H1 (cell line): ENCODE measurements at regions of chr1 and their contacts with region 1.

Region 1: DNA sequence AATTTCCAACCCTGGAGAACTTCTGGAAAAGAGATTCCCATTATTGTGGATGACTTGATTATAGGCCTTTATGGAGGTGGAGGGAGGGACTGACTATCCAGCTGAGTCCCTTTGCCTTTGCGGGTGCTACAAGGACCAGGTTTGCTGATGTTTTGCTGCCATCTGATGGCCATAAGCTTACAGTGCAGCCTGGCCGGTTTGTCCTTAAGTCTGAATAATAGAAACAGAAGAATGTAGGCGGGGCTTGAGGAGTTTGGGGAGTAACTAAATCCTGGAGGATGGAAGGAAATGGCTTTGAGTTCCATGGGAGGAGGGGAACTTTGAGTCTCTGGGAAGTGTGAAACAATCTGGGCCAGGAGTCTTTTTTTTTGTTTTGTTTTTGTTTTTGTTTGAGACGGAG is 55.7 kb upstream of the CD1D start:
- DNase-seq: peak; percentile 89 to 91
- H3K4me3 ChIP-seq: no peak overlapping the region
- H3K27ac ChIP-seq: no peak overlapping the region
- H3K4me1 ChIP-seq: peaks cover 0 to 10% (median 7%) of the 10 kb centered on the region in 4 experiments; a peak in 5 of 7 replicates
- H3K27me3 ChIP-seq: no peaks in the 10 kb centered on the region
- CTCF ChIP-seq: peak; percentile 76 to 99 (median 97)
- EP300 ChIP-seq: 0 out of 3 replicates have a peak, but pooled peaks of 1 of the 2 experiments have one; percentile 26
- POLR2A ChIP-seq: no peak
- RAD21 ChIP-seq: peak; percentile 99 to 100

Region 2: DNA sequence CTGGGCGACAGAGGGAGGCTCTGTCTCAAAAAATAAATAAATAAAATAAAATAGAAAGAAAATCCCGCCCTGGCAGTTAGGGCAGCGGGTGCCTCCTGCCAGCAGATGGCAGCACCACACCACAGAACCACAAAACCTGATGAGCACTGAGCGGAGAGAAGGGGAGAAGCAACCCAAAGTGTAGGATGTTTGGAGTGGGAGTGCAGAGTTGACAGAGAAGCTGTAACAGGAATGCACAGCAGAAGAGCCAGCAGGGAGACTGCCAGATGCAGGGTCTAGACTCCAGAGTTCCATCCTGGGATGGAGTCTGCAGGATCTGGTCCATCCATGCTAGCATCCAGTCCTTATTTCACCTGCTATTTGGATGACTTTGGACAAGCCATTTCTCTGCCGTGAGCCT is 161.3 kb before region 1 on chr1:
- CTCF ChIA-PET with region 1: interaction called, 2,918 read pairs
- POLR2A ChIA-PET with region 1: interaction called, 5 read pairs
- DNase-seq: peak; percentile 17 to 86
- H3K4me3 ChIP-seq: no peak overlapping the region
- H3K27ac ChIP-seq: no peak overlapping the region
- H3K4me1 ChIP-seq: peaks cover 0 to 8% (median 1%) of the 10 kb centered on the region in 4 experiments; a peak in 3 of 7 replicates
- H3K27me3 ChIP-seq: peaks cover 0 to 2% (median 0%) of the 10 kb centered on the region in 4 experiments; a peak in 1 of 7 replicates
- CTCF ChIP-seq: peak; percentile 75 to 95 (median 76)
- EP300 ChIP-seq: no peak
- POLR2A ChIP-seq: no peak
- RAD21 ChIP-seq: peak; percentile 96 to 97

Region 3: GRCh38 chr1:158035976-158036583 is 88.9 kb before region 1 on chr1:
- CTCF ChIA-PET with region 1: interaction called, 25 read pairs
- POLR2A ChIA-PET with region 1: no interaction called
- DNase-seq: no peak
- H3K4me3 ChIP-seq: no peak overlapping the region
- H3K27ac ChIP-seq: no peak overlapping the region; the same call in 1 of the 2 replicates
- H3K4me1 ChIP-seq: peaks cover 3 to 12% (median 7%) of the 10 kb centered on the region in 4 experiments
- H3K27me3 ChIP-seq: no peaks in the 10 kb centered on the region
- CTCF ChIP-seq: peak in 2 of 3 experiments; percentile 57 to 65; a peak in 3 of 4 replicates
- EP300 ChIP-seq: no peak
- POLR2A ChIP-seq: no peak
- RAD21 ChIP-seq: peak; percentile 51 to 61

Region 4: DNA sequence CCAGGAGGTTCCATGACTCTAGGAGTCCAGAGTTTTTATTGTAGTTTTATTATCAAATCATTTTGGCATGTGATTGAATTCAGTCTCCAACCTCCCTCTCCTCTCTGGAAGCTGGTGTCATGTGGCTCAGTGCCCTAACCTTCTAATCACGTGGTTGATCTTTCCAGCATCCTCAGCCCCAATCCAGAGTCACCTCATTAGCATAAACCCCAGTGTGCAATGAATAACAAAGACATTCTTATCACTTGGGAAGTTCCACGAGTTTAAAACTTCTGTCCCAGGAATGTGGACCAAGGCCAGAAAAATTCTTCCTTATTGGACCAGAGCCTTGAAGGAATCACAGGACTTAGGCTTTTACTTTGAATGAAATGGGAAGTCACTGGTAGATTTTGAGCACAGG is 79.4 kb before region 1 on chr1:
- CTCF ChIA-PET with region 1: interaction called, 10 read pairs
- POLR2A ChIA-PET with region 1: no interaction called
- DNase-seq: peak in 1 of 2 experiments; percentile 17
- H3K4me3 ChIP-seq: no peak overlapping the region; a peak in 1 of 8 replicates
- H3K27ac ChIP-seq: no peak overlapping the region
- H3K4me1 ChIP-seq: peaks cover 2 to 19% (median 12%) of the 10 kb centered on the region in 4 experiments
- H3K27me3 ChIP-seq: no peaks in the 10 kb centered on the region
- CTCF ChIP-seq: no peak
- EP300 ChIP-seq: no peak
- POLR2A ChIP-seq: no peak
- RAD21 ChIP-seq: no peak

Region 5: DNA sequence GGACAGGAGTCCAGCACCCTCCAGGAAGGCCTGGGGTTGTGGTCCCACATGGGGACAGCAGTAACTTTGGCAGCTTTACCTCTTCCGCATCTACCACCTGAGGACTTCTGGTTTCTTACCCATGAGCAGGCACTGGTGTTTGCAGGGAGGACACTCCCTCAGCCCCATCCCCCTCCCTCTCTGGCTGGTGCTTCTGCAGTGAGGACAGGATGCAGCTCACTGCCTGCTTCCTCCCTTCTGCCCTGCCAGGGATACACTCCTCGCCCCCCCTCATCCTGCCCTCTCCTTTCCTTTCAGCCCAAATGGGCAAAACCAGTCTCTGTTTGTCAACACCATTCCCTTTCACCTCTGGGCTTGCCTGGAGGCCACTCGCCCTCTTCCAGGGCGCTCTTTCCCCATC is 69.1 kb before region 1 on chr1:
- CTCF ChIA-PET with region 1: interaction called, 27 read pairs
- POLR2A ChIA-PET with region 1: no interaction called
- DNase-seq: no peak
- H3K4me3 ChIP-seq: no peak overlapping the region
- H3K27ac ChIP-seq: no peak overlapping the region
- H3K4me1 ChIP-seq: peaks cover 1 to 24% (median 12%) of the 10 kb centered on the region in 4 experiments
- H3K27me3 ChIP-seq: no peaks in the 10 kb centered on the region
- CTCF ChIP-seq: no peak
- EP300 ChIP-seq: no peak
- POLR2A ChIP-seq: no peak
- RAD21 ChIP-seq: no peak

Region 6: DNA sequence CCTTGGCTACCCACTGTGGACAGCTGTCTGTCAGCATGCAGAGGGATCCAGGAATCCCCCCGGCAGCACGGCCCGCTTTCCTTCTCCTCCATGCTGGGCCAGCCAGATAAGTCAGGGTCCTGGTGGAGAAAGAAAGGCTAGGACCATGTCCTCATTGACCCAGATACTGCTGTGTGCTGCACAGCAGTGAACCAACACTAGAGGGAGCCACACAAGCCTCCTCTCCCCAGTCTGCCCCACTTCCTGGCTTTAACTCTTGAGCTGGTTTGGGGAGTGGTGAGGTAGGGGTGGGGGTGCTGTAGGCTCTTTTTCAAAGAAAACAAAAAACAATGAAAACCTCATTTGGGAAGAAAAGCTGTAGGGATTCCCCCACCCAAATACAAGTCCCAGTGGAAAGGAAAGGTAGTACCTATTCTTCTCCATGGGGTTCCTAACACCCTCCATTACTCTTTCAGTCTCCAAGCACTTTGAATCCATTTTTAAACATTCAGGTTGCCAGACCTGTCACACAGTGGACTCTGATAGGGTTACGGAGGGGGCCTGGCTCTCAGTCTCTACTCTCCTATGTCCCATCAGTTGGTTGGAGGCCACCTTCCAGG is 29.2 kb before region 1 on chr1:
- CTCF ChIA-PET with region 1: interaction called, 1,033 read pairs
- POLR2A ChIA-PET with region 1: interaction called, 6 read pairs
- DNase-seq: peak; percentile 50 to 73
- H3K4me3 ChIP-seq: no peak overlapping the region
- H3K27ac ChIP-seq: no peak overlapping the region
- H3K4me1 ChIP-seq: peaks cover 8 to 25% (median 18%) of the 10 kb centered on the region in 4 experiments
- H3K27me3 ChIP-seq: no peaks in the 10 kb centered on the region
- CTCF ChIP-seq: peak; percentile 94 to 96 (median 94)
- EP300 ChIP-seq: no peak
- POLR2A ChIP-seq: no peak
- RAD21 ChIP-seq: peak; percentile 77 to 81

Region 7: DNA sequence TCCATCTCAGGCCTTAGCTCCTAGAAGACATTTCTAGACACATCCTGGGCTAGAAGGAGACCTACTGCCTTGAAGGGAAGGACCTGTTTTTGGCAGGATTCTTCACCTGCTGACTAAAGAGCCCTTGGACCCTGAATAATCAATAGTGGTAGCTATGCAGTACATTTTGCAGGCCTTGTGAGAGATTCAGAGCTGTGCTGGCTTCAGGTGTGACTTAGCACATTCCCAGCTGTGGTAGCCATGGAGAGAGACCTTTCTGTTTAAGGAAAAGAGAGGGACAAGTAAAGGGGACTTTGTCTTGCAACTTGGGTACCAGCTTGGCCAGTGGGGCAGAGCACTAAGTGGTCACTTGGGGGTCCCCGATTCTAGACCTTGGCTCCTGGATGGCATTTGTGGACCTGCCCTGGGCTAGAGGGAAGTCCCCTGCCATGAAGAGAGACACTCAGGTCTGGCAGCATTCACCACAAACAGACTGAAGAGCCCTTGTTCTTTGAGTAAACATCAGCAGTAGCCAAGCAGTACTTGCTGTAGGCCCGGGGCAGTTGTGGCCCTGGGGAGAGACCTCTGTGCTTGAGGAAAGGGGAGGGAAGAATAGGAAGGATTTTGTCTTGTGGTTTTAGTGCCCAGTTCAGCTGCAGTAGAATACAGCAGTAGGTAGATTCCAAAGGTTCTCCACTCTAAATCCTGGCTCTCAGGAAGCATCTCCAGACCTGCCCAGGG is 103.1 kb after region 1 on chr1:
- CTCF ChIA-PET with region 1: no interaction called
- POLR2A ChIA-PET with region 1: no interaction called
- DNase-seq: no peak
- H3K4me3 ChIP-seq: no peak overlapping the region
- H3K27ac ChIP-seq: no peak overlapping the region
- H3K4me1 ChIP-seq: no peaks in the 10 kb centered on the region
- H3K27me3 ChIP-seq: no peaks in the 10 kb centered on the region
- CTCF ChIP-seq: no peak
- EP300 ChIP-seq: no peak
- POLR2A ChIP-seq: no peak
- RAD21 ChIP-seq: no peak

Region 8: DNA sequence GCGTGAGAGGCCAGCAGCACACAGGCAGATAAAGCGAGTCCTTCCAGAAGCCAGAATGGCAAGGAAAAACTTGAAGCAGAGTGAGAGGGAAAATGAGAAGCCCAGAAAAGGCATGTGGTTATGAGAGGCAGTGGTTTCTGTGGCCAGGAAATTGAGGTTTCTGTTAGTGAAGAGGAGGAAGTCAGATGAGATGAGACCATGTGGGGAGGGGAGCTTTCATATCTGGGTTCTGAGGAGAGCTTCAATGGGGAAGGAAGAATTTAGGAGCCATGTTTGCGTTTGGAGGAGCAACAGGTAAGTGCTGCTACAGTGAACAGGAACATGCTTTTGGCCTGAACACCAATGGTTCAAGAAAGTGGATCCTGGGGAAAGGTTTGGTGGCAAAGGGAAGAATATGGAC is 123.1 kb after region 1 on chr1:
- CTCF ChIA-PET with region 1: no interaction called
- POLR2A ChIA-PET with region 1: no interaction called
- DNase-seq: no peak
- H3K4me3 ChIP-seq: no peak overlapping the region
- H3K27ac ChIP-seq: no peak overlapping the region
- H3K4me1 ChIP-seq: no peaks in the 10 kb centered on the region
- H3K27me3 ChIP-seq: no peaks in the 10 kb centered on the region
- CTCF ChIP-seq: no peak
- EP300 ChIP-seq: no peak
- POLR2A ChIP-seq: no peak
- RAD21 ChIP-seq: no peak